Transverse colon (tissue), 4 donors: ENCODE measurements at regions of chr19 and their contacts with region 1.

Region 1: GRCh38 chr19:42246143-42246921 is 3.9 kb upstream of the GSK3A start:
- DNase-seq: peak; percentile 74
- H3K4me3 ChIP-seq: no peak overlapping the region
- H3K27ac ChIP-seq: peak overlapping the region; percentile 34 to 96 (median 86)
- H3K4me1 ChIP-seq: peaks cover 17 to 45% (median 39%) of the 10 kb centered on the region in 4 donors
- H3K27me3 ChIP-seq: no peaks in the 10 kb centered on the region
- CTCF ChIP-seq: peak; percentile 57 to 63 (median 62)
- EP300 ChIP-seq: no peak
- POLR2A ChIP-seq: no peak

Region 2: GRCh38 chr19:42279572-42280191 is 33.4 kb after region 1 on chr19:
- in situ Hi-C with region 1: no loop called
- intact Hi-C with region 1: loop called (anchors 2 kb)
- DNase-seq: peak; percentile 69
- H3K4me3 ChIP-seq: peak overlapping the region; percentile 50 to 89 (median 84)
- H3K27ac ChIP-seq: peak overlapping the region; percentile 91 to 99 (median 92)
- H3K4me1 ChIP-seq: peaks cover 43 to 74% (median 61%) of the 10 kb centered on the region in 4 donors
- H3K27me3 ChIP-seq: no peaks in the 10 kb centered on the region
- CTCF ChIP-seq: peak; percentile 91 to 96 (median 92)
- EP300 ChIP-seq: no peak
- POLR2A ChIP-seq: no peak

Region 3: GRCh38 chr19:42301656-42302203 is 55.4 kb after region 1 on chr19 and contains the start of gene PRR19:
- in situ Hi-C with region 1: no loop called
- intact Hi-C with region 1: no loop called
- DNase-seq: peak; percentile 48
- H3K4me3 ChIP-seq: peak within 1 kb of the TSS; percentile 26 to 63 (median 51)
- H3K27ac ChIP-seq: peak within 1 kb of the TSS; percentile 59 to 72 (median 70)
- H3K4me1 ChIP-seq: peaks cover 3 to 17% (median 7%) of the 10 kb centered on the region in 4 donors
- H3K27me3 ChIP-seq: no peaks in the 10 kb centered on the region
- CTCF ChIP-seq: no peak
- EP300 ChIP-seq: no peak
- POLR2A ChIP-seq: no peak
- total RNA-seq, gene PRR19: 0.41 to 0.79 TPM in 2 of 4 donors, not detected in the others

Region 4: DNA sequence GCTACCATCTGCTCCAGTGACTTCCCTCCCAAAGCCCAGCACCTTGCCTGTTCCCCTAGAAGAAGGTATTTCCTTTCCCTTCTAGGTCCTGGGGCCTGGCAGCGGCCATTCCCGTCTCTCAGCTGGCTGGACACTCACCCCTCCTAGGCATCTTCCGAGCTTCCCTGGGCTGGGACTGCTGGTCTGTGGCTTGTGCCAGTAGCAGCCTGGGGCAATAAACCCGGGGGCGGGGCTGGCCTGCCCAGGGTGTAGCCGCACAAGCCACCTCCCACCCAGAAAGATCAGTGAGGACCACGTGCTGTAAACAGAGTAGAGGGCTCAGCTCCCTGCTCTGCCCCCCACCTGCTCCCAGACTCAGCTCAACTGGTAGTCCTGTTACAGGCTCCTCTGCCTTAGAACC is 165.9 kb after region 1 on chr19:
- in situ Hi-C with region 1: no loop called
- intact Hi-C with region 1: no loop called
- DNase-seq: peak; percentile 81
- H3K4me3 ChIP-seq: no peak overlapping the region
- H3K27ac ChIP-seq: no peak overlapping the region
- H3K4me1 ChIP-seq: peaks cover 0 to 14% (median 3%) of the 10 kb centered on the region in 4 donors
- H3K27me3 ChIP-seq: no peaks in the 10 kb centered on the region
- CTCF ChIP-seq: no peak
- EP300 ChIP-seq: no peak
- POLR2A ChIP-seq: no peak

Region 5: DNA sequence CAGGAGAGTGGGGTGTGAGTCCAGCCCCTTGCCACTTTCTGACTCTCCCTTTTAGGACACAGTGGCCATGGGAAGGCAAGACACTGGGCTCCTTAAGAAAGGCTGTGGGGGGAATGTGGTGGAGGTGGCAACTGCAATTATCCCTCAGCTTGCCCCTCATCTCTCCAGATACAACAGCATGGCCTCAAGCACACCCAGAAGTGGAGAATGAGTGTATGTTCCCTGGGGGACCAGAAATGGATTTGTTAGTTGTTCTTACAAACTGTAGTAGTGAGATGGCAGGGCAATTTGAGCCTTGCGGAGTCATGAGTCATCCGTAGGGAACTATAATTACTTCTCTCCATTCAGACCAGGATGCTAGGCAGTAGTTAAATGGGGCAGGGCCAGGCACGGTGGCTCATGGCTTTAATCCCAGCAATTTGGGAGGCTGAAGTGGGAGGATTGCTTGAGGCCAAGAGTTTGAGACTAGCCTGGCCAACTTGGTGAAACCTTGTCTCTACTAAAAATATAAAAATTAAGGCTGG is 222.0 kb after region 1 on chr19:
- in situ Hi-C with region 1: no loop called
- intact Hi-C with region 1: no loop called
- DNase-seq: peak; percentile 68
- H3K4me3 ChIP-seq: no peak overlapping the region
- H3K27ac ChIP-seq: peak overlapping the region; percentile 41 to 66 (median 56)
- H3K4me1 ChIP-seq: peaks cover 0 to 32% (median 16%) of the 10 kb centered on the region in 4 donors
- H3K27me3 ChIP-seq: no peaks in the 10 kb centered on the region
- CTCF ChIP-seq: no peak
- EP300 ChIP-seq: no peak
- POLR2A ChIP-seq: no peak

Region 6: GRCh38 chr19:42497492-42498168 is 251.3 kb after region 1 on chr19:
- in situ Hi-C with region 1: no loop called
- intact Hi-C with region 1: no loop called
- DNase-seq: peak; percentile 61
- H3K4me3 ChIP-seq: no peak overlapping the region
- H3K27ac ChIP-seq: peak overlapping the region; percentile 70 to 80 (median 72)
- H3K4me1 ChIP-seq: peaks cover 11 to 40% (median 25%) of the 10 kb centered on the region in 4 donors
- H3K27me3 ChIP-seq: no peaks in the 10 kb centered on the region
- CTCF ChIP-seq: no peak
- EP300 ChIP-seq: no peak
- POLR2A ChIP-seq: peak; percentile 42